Activated naive CD4-positive, alpha-beta T cell treated with anti-CD3 and anti-CD28 coated beads for 36 hours (primary cell): ENCODE measurements at regions of chr6 and their contacts with region 1.

Region 1: GRCh38 chr6:27146706-27147505 is 100.6 kb upstream of the PRSS16 start:
- DNase-seq: peak; percentile 87
- H3K4me3 Mint-ChIP-seq: no peak overlapping the region
- H3K27ac Mint-ChIP-seq: no peak overlapping the region
- H3K4me1 Mint-ChIP-seq: peaks cover 11% of the 10 kb centered on the region
- H3K27me3 Mint-ChIP-seq: no peaks in the 10 kb centered on the region

Region 2: GRCh38 chr6:27864906-27865849 is 718.3 kb after region 1 on chr6:
- CTCF ChIA-PET with region 1: no interaction called
- intact Hi-C with region 1: loop called (anchors 2 kb)
- DNase-seq: peak; percentile 84
- H3K4me3 Mint-ChIP-seq: peak overlapping the region; percentile 97
- H3K27ac Mint-ChIP-seq: peak overlapping the region; percentile 96
- H3K4me1 Mint-ChIP-seq: peaks cover 26% of the 10 kb centered on the region
- H3K27me3 Mint-ChIP-seq: peaks cover 8% of the 10 kb centered on the region